ENCODE measurements at regions of chr3 and their contacts with region 1.

Region 1: GRCh38 chr3:45555086-45555591 is 39.4 kb upstream of the LIMD1 start:
- DNase-seq: peak; percentile 34
- H3K4me3 ChIP-seq: no peak overlapping the region
- H3K27ac ChIP-seq: no peak overlapping the region
- H3K4me1 ChIP-seq: peaks cover 50% of the 10 kb centered on the region
- H3K27me3 ChIP-seq: no peaks in the 10 kb centered on the region
- CTCF ChIP-seq: no peak

Region 2: GRCh38 chr3:45516829-45517228 is 38.3 kb before region 1 on chr3:
- CTCF ChIA-PET with region 1: no interaction called
- dilution Hi-C with region 1: no loop called
- in situ Hi-C with region 1: no loop called
- intact Hi-C with region 1: loop called (anchors 1 kb)
- DNase-seq: no peak
- H3K4me3 ChIP-seq: no peak overlapping the region
- H3K27ac ChIP-seq: no peak overlapping the region
- H3K4me1 ChIP-seq: no peaks in the 10 kb centered on the region
- H3K27me3 ChIP-seq: no peaks in the 10 kb centered on the region
- CTCF ChIP-seq: no peak